Activated naive CD4-positive, alpha-beta T cell treated with anti-CD3 and anti-CD28 coated beads for 36 hours (primary cell): ENCODE measurements at regions of chr16 and their contacts with region 1.

Region 1: GRCh38 chr16:87540945-87541877 is 48.4 kb upstream of the ZCCHC14 start:
- DNase-seq: no peak
- H3K4me3 Mint-ChIP-seq: no peak overlapping the region
- H3K27ac Mint-ChIP-seq: no peak overlapping the region
- H3K4me1 Mint-ChIP-seq: peaks cover 12% of the 10 kb centered on the region
- H3K27me3 Mint-ChIP-seq: peaks cover 18% of the 10 kb centered on the region

Region 2: GRCh38 chr16:87416826-87417527 is 124.2 kb before region 1 on chr16:
- CTCF ChIA-PET with region 1: interaction called, 5 read pairs
- intact Hi-C with region 1: loop called (anchors 2 kb)
- DNase-seq: peak; percentile 75
- H3K4me3 Mint-ChIP-seq: no peak overlapping the region
- H3K27ac Mint-ChIP-seq: peak overlapping the region; percentile 24
- H3K4me1 Mint-ChIP-seq: no peaks in the 10 kb centered on the region
- H3K27me3 Mint-ChIP-seq: no peaks in the 10 kb centered on the region